PC-9 (cell line): ENCODE measurements at regions of chr12 and their contacts with region 1.

Region 1: GRCh38 chr12:65986047-65986446 is 144.5 kb downstream of the LLPH start:
- DNase-seq: peak in 1 of 2 experiments; percentile 32
- H3K4me3 ChIP-seq: no peak overlapping the region
- H3K27ac ChIP-seq: no peak overlapping the region
- H3K4me1 ChIP-seq: no peaks in the 10 kb centered on the region
- H3K27me3 ChIP-seq: no peaks in the 10 kb centered on the region
- CTCF ChIP-seq: no peak

Region 2: DNA sequence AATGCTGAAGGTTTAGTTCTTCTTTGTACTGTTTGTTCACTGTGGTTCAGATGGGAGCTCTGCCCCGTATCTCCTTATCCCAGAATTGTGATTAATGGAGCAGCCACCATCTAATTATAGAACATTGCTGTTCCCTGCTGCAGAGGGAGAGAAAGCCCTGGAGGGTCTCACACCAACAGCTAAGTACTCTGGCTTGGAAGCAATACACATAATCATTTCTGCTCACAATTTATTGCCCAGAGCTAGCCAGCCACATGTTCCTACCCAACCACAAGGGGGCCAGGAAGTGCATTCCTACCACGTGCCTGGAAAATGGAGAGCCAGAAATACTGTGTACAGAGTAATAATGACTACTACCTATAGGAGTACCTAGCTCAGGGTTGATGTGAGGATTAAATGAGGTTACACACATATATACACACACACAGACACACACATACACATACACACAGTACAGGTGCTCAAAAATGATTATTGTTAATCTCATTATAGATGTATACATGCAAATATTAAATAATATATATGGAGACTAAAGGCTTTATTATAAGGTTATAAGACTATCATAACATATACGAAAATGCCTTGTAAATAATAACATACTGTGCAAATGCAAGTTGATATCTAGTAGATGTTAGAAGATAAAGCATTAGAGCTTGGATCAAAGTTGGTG is 685.2 kb before region 1 on chr12:
- CTCF ChIA-PET with region 1: no interaction called
- POLR2A ChIA-PET with region 1: no interaction called
- intact Hi-C with region 1: loop called (anchors 1 kb)
- DNase-seq: peak in 1 of 2 experiments; percentile 8
- H3K4me3 ChIP-seq: no peak overlapping the region
- H3K27ac ChIP-seq: no peak overlapping the region
- H3K4me1 ChIP-seq: no peaks in the 10 kb centered on the region
- H3K27me3 ChIP-seq: no peaks in the 10 kb centered on the region
- CTCF ChIP-seq: peak; percentile 63

Region 3: GRCh38 chr12:65306366-65307168 is 679.5 kb before region 1 on chr12:
- CTCF ChIA-PET with region 1: no interaction called
- POLR2A ChIA-PET with region 1: no interaction called
- intact Hi-C with region 1: loop called (anchors 1 kb)
- DNase-seq: peak in 1 of 2 experiments; percentile 32
- H3K4me3 ChIP-seq: no peak overlapping the region
- H3K27ac ChIP-seq: no peak overlapping the region
- H3K4me1 ChIP-seq: no peaks in the 10 kb centered on the region
- H3K27me3 ChIP-seq: no peaks in the 10 kb centered on the region
- CTCF ChIP-seq: peak; percentile 76

Region 4: GRCh38 chr12:65853489-65854370 is 132.3 kb before region 1 on chr12:
- CTCF ChIA-PET with region 1: no interaction called
- POLR2A ChIA-PET with region 1: no interaction called
- intact Hi-C with region 1: no loop called
- DNase-seq: no peak
- H3K4me3 ChIP-seq: no peak overlapping the region
- H3K27ac ChIP-seq: no peak overlapping the region
- H3K4me1 ChIP-seq: no peaks in the 10 kb centered on the region
- H3K27me3 ChIP-seq: no peaks in the 10 kb centered on the region
- CTCF ChIP-seq: no peak